Cardiac septum (tissue), 1 donor: ENCODE measurements at regions of chr9 and their contacts with region 1.

Region 1: DNA sequence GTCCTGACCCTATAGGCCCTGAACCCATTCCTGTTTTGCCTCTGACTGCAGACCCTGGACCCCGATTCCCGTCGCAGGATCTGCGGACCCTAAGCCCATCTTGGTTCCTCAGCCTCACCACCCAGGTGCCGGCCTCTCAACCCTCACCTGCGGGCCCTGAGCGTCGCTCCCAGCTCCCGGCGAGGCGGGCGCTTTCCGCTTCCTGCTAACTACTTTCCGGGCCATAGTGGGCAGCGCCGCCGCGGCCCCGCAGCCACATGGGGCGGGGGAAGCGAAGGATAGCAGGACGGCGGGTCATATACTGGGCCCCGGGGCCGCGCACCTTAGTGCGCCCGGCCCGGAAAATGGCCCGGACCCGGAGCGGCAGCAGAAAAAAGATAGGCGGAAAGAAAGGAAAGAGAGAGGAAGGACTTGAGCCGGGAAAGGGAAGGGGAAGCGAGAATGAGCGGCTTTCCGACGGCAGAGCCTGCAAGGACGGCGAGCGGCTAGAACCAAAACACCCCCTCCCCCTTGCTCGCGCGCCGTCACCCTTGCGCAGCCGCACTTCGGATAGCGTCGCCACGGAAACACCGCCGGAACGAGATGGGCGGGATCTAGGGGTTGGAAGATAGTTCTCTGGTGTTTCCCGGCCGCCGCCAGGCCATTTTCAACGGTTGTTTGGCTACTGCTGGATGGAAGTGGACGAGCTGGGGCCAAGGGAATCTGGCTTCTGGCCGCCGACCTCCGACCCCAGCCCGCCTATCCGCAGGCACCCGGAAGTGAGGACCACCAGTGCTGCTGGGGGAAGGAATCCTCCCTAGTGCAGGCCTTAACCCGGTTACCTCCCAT is at the start of gene DCAF12:
- DNase-seq: peak; percentile 97
- total RNA-seq, gene DCAF12: 15.7 TPM

Region 2: DNA sequence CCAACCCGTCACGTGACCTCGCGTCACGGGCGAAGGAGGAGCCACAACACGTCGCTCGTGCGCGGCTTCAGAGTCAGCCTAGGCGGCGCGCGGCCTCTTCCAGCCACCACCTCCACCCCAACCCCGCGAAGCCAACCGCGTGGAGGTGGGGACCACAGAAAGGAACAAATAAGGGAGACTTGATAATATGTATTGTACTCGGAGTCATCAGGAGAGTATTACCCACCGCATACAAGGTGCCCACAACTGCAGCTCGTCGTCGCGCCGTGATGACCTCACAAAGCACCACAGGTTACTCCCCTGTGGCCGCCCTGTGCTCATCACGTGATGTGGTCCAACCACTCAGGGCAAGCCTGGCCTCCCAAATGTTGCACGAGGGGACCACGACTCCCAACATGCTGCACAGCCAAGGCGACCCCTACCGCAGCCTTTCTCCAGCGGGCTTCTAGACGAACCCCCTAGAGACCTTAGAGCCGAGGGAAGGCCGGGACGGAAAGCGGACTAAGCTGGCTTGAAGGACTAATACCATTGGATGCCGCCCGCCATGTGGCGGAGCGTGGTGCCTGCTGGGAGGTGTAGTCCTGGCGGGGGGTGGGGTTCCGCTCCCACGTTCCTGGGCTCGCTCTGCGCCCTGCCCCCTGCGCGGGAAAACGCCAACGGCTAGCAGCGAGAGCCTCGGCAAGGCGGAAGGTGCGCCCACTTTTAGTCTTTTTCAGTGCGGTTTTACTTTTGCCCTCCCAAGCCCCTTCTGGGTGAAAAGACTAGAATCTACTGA is 77.3 kb before region 1 on chr9:
- intact Hi-C with region 1: loop called (anchors 5 kb)
- DNase-seq: peak; percentile 98

Region 3: DNA sequence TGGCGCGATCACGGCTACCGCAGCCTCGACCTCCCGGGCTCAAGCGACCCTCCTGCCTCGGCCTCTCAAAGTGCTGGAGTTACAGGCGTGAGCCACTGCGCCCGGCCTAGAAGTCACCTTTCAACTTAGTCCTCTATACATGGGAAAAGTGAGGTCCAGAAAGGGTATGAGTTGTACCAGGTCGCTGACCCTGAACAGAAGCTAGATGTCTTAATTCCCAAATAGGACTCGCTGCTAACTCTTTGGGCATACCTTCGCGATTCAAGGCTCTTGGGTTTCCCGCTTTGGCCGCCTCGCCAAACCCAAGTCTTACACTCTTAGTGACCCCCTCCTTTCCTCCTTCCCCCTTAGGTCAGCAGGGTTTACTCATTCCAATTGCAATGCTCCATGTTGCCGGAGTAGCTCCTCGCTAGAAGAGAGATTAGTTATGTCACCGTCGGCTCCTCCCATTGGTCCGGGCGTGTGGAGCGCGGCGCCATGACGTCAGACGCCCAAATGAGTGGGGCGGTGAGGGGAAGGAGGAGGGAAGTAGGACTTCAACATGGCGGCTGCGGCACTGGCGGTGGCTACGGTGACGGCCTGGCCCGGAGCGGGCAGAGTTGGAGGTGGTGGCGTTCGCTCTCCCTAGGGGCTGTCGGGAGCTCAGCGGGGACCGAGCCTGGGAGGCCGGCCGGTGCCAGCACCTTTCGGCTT is 52.2 kb after region 1 on chr9 and contains the start of gene UBAP1:
- intact Hi-C with region 1: loop called (anchors 10 kb)
- DNase-seq: peak; percentile 98
- total RNA-seq, gene UBAP1: 40.6 TPM